ENCODE measurements at regions of chr11 and their contacts with region 1.

Region 1: GRCh38 chr11:1832211-1832919 is 2.4 kb upstream of the SYT8 start:
- DNase-seq: peak in 1 of 2 experiments; percentile 92
- H3K4me3 ChIP-seq: peak overlapping the region; percentile 9 to 68 (median 44); a peak in 7 of 8 replicates
- H3K27ac ChIP-seq: no peak overlapping the region
- H3K4me1 ChIP-seq: peaks cover 0 to 4% (median 2%) of the 10 kb centered on the region in 4 experiments; a peak in 4 of 7 replicates
- H3K27me3 ChIP-seq: peaks cover 0 to 6% (median 1%) of the 10 kb centered on the region in 4 experiments; a peak in 3 of 7 replicates
- CTCF ChIP-seq: peak in 2 of 3 experiments; percentile 76 to 89; a peak in 3 of 4 replicates
- EP300 ChIP-seq: no peak
- POLR2A ChIP-seq: no peak
- RAD21 ChIP-seq: peak; percentile 67 to 79

Region 2: DNA sequence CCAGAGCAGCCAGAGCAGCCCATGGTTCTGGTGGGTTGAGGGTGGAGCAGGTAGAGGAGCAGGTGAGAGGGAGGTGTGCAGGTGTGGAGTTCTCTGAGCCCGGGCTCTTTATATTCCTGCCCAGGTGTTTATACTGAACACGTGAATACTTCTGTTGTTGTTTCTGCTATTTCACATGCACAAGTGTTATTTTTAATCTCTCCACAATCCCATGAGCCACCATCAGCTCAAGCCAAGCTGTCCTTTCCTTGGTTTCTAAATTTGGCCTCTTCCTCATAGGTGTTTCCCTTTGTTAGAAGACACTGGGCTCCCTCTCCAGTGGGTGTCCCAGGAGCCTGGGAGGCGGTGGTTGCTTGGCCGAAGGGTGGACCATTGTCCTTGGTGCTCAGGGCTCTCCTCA is 224.0 kb before region 1 on chr11 and contains the start of gene KRTAP5-3:
- CTCF ChIA-PET with region 1: no interaction called
- POLR2A ChIA-PET with region 1: no interaction called
- DNase-seq: no peak
- H3K4me3 ChIP-seq: no peak within 1 kb of the TSS
- H3K27ac ChIP-seq: no peak within 1 kb of the TSS
- H3K4me1 ChIP-seq: no peaks in the 10 kb centered on the region
- H3K27me3 ChIP-seq: no peaks in the 10 kb centered on the region
- CTCF ChIP-seq: no peak
- EP300 ChIP-seq: no peak
- POLR2A ChIP-seq: no peak
- RAD21 ChIP-seq: no peak
- total RNA-seq, gene KRTAP5-3: not detected in 2 replicates

Region 3: GRCh38 chr11:1694064-1694845 is 138.1 kb before region 1 on chr11:
- CTCF ChIA-PET with region 1: interaction called, 255 read pairs
- POLR2A ChIA-PET with region 1: interaction called, 4 read pairs
- DNase-seq: peak; percentile 84 to 98
- H3K4me3 ChIP-seq: peak overlapping the region in 3 of 4 experiments; percentile 29 to 59 (median 45); a peak in 3 of 8 replicates
- H3K27ac ChIP-seq: no peak overlapping the region
- H3K4me1 ChIP-seq: peaks cover 0 to 10% (median 3%) of the 10 kb centered on the region in 4 experiments; a peak in 3 of 7 replicates
- H3K27me3 ChIP-seq: peaks cover 0 to 7% (median 0%) of the 10 kb centered on the region in 4 experiments; a peak in 3 of 7 replicates
- CTCF ChIP-seq: peak; percentile 81 to 97 (median 86)
- EP300 ChIP-seq: peak in 1 of 2 experiments; percentile 49; a peak in 1 of 3 replicates
- POLR2A ChIP-seq: no peak
- RAD21 ChIP-seq: peak; percentile 91 to 95

Region 4: GRCh38 chr11:1749414-1750312 is 82.7 kb before region 1 on chr11:
- CTCF ChIA-PET with region 1: interaction called, 15 read pairs
- POLR2A ChIA-PET with region 1: no interaction called
- DNase-seq: no peak
- H3K4me3 ChIP-seq: peak overlapping the region; percentile 33 to 65 (median 40); a peak in 5 of 8 replicates
- H3K27ac ChIP-seq: no peak overlapping the region
- H3K4me1 ChIP-seq: peaks cover 0 to 12% (median 4%) of the 10 kb centered on the region in 4 experiments; a peak in 5 of 7 replicates
- H3K27me3 ChIP-seq: peaks cover 12 to 32% (median 27%) of the 10 kb centered on the region in 4 experiments; a peak in 6 of 7 replicates
- CTCF ChIP-seq: no peak
- EP300 ChIP-seq: no peak
- POLR2A ChIP-seq: no peak
- RAD21 ChIP-seq: no peak

Region 5: DNA sequence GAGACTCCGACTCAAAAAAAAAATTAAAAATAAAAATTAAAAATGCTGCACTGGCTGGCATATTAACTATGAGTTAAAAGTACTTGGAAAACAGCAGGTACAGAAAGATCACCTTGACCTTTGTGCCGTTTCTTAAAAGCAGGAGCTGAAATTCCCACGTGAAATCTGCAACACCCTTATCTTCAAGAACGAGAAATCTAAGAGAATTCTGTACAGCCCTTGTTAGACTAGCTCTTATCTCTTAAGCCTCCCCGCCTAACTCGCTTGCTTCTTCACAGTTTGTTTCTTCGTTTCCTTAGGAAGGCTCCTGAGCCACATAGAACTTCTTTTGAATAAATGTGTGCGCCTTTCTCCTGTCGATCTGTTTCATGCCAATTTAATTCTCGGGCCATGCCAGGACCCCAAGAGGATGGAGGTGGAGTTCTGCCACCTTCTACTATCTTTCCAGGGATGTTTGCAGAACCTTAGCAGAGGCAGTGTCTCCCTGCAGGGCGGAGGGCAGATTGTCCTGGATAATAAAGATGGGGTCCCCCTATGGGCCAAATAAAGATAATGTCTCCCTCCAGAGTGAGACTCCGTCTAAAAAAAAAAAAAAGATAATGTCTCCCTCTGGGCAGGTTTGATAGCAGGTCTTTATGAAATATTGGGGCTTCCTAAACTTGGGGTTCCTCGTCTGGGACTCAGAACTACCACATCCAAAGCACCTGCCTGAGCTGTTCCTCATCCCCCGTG is 24.9 kb before region 1 on chr11:
- CTCF ChIA-PET with region 1: interaction called, 24 read pairs
- POLR2A ChIA-PET with region 1: no interaction called
- DNase-seq: no peak
- H3K4me3 ChIP-seq: no peak overlapping the region
- H3K27ac ChIP-seq: no peak overlapping the region
- H3K4me1 ChIP-seq: 0 out of 7 replicates have a peak, but pooled peaks cover 0 to 3% (median 0%) of the 10 kb centered on the region in 4 experiments
- H3K27me3 ChIP-seq: peaks cover 0 to 2% (median 1%) of the 10 kb centered on the region in 4 experiments; a peak in 2 of 7 replicates
- CTCF ChIP-seq: peak in 2 of 3 experiments; percentile 29 to 41; a peak in 3 of 4 replicates
- EP300 ChIP-seq: no peak
- POLR2A ChIP-seq: no peak
- RAD21 ChIP-seq: peak; percentile 6 to 28; a peak in 1 of 4 replicates

Region 6: GRCh38 chr11:1852877-1853276 is 20.5 kb after region 1 on chr11 and contains the start of gene LSP1:
- CTCF ChIA-PET with region 1: interaction called, 22 read pairs
- POLR2A ChIA-PET with region 1: no interaction called
- DNase-seq: no peak
- H3K4me3 ChIP-seq: no peak within 1 kb of the TSS
- H3K27ac ChIP-seq: no peak within 1 kb of the TSS
- H3K4me1 ChIP-seq: no peaks in the 10 kb centered on the region
- H3K27me3 ChIP-seq: no peaks in the 10 kb centered on the region
- CTCF ChIP-seq: no peak
- EP300 ChIP-seq: no peak
- POLR2A ChIP-seq: no peak
- RAD21 ChIP-seq: no peak
- total RNA-seq, gene LSP1: not detected in 2 replicates

Region 7: GRCh38 chr11:1882519-1883238 is 50.3 kb after region 1 on chr11:
- CTCF ChIA-PET with region 1: interaction called, 27 read pairs
- POLR2A ChIA-PET with region 1: no interaction called
- DNase-seq: peak; percentile 54 to 94
- H3K4me3 ChIP-seq: no peak overlapping the region
- H3K27ac ChIP-seq: no peak overlapping the region
- H3K4me1 ChIP-seq: peaks cover 0 to 5% (median 2%) of the 10 kb centered on the region in 4 experiments; a peak in 3 of 7 replicates
- H3K27me3 ChIP-seq: no peaks in the 10 kb centered on the region; a peak in 1 of 7 replicates
- CTCF ChIP-seq: peak; percentile 91 to 94 (median 92)
- EP300 ChIP-seq: no peak
- POLR2A ChIP-seq: no peak
- RAD21 ChIP-seq: peak; percentile 89 to 94

Region 8: DNA sequence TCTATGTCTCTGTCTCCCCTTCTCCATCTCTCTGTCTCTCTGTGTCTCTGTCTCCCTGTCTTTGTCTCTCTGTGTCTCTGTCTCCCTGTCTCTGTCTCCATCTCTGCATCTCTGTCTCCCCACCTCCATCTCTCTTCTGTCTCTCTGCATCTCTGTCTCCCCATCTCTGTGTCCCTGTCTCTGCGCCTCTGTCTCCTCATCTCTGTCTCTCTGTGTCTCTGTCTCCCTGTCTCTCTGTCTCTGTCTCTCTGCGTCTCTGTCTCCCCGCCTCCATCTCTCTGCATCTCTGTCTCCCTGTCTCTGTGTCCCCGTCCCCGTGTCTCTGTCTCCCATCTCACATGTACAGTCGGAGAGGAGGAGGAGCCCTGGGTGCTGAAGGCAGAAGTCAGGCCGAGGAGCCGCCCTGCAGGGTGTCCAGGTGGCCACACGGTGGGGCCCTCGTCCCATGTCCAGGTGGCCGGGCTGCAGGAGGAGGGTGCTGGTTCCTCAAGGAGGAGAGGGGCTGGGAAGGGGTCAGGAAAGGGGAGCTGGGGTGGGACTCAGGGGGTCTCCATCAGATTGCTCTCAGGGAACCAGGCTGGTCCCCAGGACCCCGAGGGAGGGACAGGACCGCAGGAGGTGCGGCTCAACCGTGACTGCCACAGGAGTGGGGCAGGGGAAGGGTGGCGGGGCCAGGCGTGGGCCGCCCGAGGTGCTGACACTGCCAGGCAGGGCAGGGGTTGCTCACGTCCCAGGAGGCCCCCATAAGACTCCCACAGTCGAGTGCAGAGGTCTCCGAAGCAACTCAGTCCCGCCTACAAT is 364.8 kb after region 1 on chr11:
- CTCF ChIA-PET with region 1: no interaction called
- POLR2A ChIA-PET with region 1: no interaction called
- DNase-seq: peak; percentile 41 to 88
- H3K4me3 ChIP-seq: no peak overlapping the region
- H3K27ac ChIP-seq: no peak overlapping the region
- H3K4me1 ChIP-seq: no peaks in the 10 kb centered on the region
- H3K27me3 ChIP-seq: no peaks in the 10 kb centered on the region; a peak in 1 of 7 replicates
- CTCF ChIP-seq: peak; percentile 88 to 99 (median 97)
- EP300 ChIP-seq: no peak
- POLR2A ChIP-seq: no peak
- RAD21 ChIP-seq: peak; percentile 96 to 99